Left cardiac atrium (tissue), 4 donors: ENCODE measurements at regions of chr22 and their contacts with region 1.

Region 1: GRCh38 chr22:35761037-35761436 is 43.4 kb downstream of the APOL5 start:
- DNase-seq: no peak
- ATAC-seq: peak; percentile 38 to 44

Region 2: DNA sequence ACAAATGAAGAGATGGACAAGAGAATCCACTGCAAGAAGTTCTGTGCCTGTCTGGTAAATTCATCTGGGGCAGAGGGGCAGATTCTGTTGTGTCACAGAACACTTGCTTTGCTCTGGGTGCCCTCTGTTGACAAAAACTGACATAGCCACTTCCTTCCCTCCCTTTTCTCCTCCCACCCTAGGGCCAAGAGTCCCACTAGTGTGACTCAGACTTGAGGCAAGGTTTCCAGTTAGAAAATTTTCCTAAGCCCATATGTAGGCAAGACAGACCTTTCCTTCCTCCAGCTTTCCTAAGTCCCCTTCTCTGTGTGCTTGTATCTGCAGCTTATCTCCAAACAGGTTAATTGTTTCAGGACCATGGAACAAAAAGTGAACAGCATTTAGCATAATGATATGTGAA is 160.7 kb after region 1 on chr22:
- intact Hi-C with region 1: loop called in 1 of 2 experiments (anchors 5 kb)
- DNase-seq: peak; percentile 64
- ATAC-seq: peak; percentile 86 to 92